Heart right ventricle (tissue), 16 donors: ENCODE measurements at regions of chr3 and their contacts with region 1.

Region 1: DNA sequence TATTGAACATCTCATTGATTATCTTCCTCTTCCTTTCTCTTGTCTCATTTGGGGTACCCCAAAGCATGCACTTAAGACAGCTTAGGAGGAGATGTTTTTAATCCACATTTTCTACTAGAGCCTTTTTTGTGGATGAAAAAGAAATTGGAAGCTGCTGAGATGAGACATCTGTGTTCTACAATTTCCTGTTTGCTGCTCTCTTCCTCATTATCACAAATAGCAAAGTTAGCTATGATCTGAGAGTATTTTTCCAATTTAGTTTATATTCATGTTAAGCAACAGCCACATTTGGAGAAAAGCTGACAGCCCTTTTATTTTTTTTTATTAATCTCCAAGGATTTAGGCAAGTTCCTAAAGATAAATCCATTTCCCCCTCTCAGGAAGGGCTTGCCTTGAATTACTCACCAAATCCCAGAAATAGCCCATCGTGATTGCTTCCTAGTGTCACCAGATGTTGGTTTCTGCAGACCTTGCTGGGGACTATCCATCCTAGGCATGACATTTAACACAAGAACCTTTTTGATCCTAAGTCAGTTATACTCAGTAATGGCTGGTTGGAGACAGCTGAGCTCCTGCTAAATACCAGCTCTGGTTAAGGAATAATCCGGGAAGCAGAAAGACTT is 70.8 kb upstream of the FILIP1L start:
- DNase-seq: peak in 1 of 2 donors; percentile 26
- ATAC-seq: peak in 7 of 8 donors; percentile 67 to 86 (median 73)
- H3K4me3 ChIP-seq: no peak overlapping the region
- H3K27ac ChIP-seq: peak overlapping the region in 9 of 10 donors; percentile 3 to 66 (median 49)
- H3K4me1 ChIP-seq: peaks cover 0 to 29% (median 16%) of the 10 kb centered on the region in 9 donors
- H3K27me3 ChIP-seq: no peaks in the 10 kb centered on the region
- CTCF ChIP-seq: no peak

Region 2: GRCh38 chr3:100221159-100221558 is 36.1 kb after region 1 on chr3:
- intact Hi-C with region 1: loop called in 1 of 10 experiments (anchors 5 kb)
- DNase-seq: no peak
- ATAC-seq: no peak
- H3K4me3 ChIP-seq: no peak overlapping the region
- H3K27ac ChIP-seq: no peak overlapping the region
- H3K4me1 ChIP-seq: peaks cover 0 to under 1% (median 0%) of the 10 kb centered on the region in 9 donors
- H3K27me3 ChIP-seq: no peaks in the 10 kb centered on the region
- CTCF ChIP-seq: no peak

Region 3: DNA sequence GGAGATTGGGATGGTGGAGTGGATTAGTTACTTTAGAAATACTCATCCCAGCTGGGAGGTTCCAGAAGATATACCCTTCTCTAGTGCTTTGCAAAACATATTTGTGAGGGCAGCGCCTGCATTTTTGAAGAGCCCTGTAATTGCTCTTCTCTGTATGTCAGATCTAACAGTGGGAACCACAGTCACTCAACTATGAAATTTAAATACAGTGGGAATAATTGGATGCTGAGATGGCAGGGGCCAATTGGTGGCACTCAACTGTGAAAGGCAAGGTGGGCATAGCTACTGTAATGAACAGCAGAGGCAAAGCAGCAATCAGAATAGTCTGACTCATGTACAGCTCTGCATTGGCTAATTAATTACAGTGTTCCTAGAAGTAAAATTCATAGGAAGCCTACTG is 53.5 kb after region 1 on chr3:
- intact Hi-C with region 1: loop called in 2 of 10 experiments (anchors 5 to 10 kb)
- DNase-seq: no peak
- ATAC-seq: no peak
- H3K4me3 ChIP-seq: no peak overlapping the region
- H3K27ac ChIP-seq: no peak overlapping the region
- H3K4me1 ChIP-seq: no peaks in the 10 kb centered on the region
- H3K27me3 ChIP-seq: no peaks in the 10 kb centered on the region
- CTCF ChIP-seq: no peak